Astrocyte of the cerebellum (primary cell): ENCODE measurements at regions of chr1 and their contacts with region 1.

Region 1: DNA sequence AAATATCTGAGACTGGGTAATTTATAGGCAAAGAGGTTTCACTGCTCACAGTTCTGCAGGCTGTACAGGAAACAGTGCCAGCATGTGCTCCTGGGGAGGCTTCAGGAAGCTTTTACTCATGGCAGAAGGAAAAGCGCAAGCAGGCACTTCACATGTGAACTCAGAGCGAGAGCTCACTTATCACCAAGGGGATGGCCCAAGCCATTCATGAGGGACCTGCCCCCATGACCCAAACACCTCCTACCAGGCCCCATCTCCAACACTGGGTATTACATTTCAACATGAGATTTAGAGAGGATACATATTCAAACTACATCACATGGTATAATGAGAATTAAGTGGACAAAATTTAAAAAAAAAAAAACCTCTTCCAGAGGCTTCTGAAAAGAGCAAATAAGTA is 13.7 kb downstream of the WASF2 start:
- DNase-seq: no peak
- H3K4me3 ChIP-seq: no peak overlapping the region
- CTCF ChIP-seq: no peak

Region 2: DNA sequence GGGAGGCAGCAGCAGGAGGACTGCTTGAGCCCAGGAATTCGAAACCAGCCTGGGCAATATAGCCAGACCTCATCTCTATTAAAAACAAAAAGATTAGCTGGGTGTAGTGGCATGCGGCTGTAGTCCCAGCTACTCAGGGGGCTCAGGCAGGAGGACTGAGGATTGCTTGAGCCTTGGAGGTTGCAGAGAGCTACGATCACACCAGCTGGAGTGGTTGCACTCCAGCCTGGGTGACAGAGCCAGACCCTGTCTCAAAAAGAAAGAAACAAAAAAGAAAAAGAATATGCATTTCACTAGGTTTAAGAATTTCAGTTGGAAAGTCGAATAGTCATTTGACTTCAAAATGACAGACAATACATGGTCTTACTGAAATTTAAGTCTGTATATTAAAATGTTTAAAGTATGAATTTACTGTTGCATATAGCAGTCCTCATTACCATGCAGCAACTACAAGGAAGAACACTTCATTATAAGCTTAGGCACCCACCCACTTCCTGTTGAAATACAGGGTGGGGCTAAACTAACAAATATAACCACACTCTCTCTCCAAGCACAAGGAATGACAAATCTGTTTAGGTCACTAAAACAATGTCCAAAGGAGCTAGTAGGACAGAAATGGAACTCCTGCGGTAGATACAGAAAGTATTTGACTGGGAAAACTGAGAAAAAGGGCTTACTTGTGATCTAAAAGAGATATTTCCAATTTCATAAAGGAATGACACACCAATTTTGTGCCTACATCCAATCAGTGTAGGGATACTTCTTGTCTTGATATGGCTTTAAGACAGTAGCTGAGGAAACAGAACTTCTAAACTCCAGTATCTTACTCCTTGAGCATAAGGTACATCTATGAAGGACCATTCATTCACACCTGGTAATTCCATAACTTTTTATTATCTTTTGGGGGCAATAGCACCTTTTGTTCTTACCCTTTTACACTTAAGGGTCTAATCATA is 39.8 kb before region 1 on chr1:
- in situ Hi-C with region 1: loop called (anchors 5 kb)
- DNase-seq: no peak
- H3K4me3 ChIP-seq: no peak overlapping the region
- CTCF ChIP-seq: no peak

Region 3: DNA sequence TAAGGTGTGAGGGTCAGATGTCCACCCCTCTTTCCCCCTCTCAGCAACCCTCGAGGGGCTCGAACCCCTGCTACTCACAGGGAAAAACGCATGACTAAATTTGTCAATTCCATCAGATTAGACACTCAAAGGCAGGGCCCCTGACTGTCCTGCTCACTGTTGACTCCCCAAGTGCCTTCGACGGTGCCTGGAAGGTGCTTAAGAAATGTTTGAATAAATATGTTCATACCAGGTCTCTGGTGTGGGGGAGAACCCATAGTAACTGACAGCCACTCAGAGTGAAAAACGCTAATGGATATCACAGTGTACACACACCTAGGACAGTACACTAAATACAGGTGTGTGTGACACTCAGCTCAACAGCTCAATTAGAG is 53.4 kb after region 1 on chr1:
- in situ Hi-C with region 1: loop called (anchors 5 kb)
- DNase-seq: no peak
- H3K4me3 ChIP-seq: no peak overlapping the region
- CTCF ChIP-seq: no peak